ENCODE measurements at regions of chr2 and their contacts with region 1.

Region 1: DNA sequence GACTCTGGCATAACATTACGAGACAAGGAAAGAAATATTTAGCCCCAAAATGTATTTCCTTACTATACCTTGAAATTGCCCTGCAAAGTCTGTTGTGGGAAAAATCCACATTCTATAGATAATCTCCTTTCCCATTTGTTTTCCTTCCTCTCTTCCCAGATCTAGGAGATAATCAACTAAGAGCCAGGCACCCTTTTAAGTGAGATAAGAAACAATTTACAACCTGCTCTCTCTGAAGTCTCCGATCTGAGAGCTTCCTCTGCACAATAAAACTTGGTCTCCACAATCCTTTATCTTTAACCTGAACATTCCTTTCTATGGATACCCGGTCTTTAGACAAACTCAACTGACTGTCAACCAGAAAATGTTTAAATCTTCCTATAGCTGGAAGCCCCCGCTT is 1160.7 kb upstream of the NRXN1 start:
- DNase-seq: no peak
- ATAC-seq: no peak
- H3K4me3 ChIP-seq: no peak overlapping the region
- H3K4me3 Mint-ChIP-seq: no peak overlapping the region
- H3K27ac ChIP-seq: no peak overlapping the region
- H3K27ac Mint-ChIP-seq: no peak overlapping the region
- H3K4me1 ChIP-seq: no peaks in the 10 kb centered on the region
- H3K4me1 Mint-ChIP-seq: no peaks in the 10 kb centered on the region
- H3K27me3 ChIP-seq: no peaks in the 10 kb centered on the region
- H3K27me3 Mint-ChIP-seq: no peaks in the 10 kb centered on the region
- CTCF ChIP-seq: no peak

Region 2: DNA sequence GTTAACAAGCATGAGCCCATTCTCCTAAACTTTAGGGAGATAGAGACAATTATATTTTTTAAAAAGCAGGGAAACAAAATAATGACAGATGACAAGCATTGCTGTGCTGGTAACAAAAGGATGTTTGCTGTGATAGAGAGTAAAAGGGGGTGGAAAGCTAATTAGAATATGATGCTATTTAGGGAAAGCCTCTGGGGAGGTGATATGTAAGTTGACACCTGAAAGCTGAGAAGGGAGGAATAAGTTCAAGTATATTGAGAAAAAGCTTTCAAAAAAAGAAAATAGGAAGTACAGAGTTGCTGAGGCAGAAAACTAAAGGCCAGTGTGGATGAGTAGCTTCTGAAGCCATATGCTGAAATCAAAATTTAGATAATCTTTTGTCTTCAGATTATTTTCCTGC is 595.6 kb before region 1 on chr2:
- CTCF ChIA-PET with region 1: no interaction called
- POLR2A ChIA-PET with region 1: no interaction called
- intact Hi-C with region 1: no loop called
- DNase-seq: no peak
- ATAC-seq: no peak
- H3K4me3 ChIP-seq: no peak overlapping the region
- H3K4me3 Mint-ChIP-seq: no peak overlapping the region
- H3K27ac ChIP-seq: no peak overlapping the region
- H3K27ac Mint-ChIP-seq: no peak overlapping the region
- H3K4me1 ChIP-seq: no peaks in the 10 kb centered on the region
- H3K4me1 Mint-ChIP-seq: no peaks in the 10 kb centered on the region
- H3K27me3 ChIP-seq: no peaks in the 10 kb centered on the region
- H3K27me3 Mint-ChIP-seq: no peaks in the 10 kb centered on the region
- CTCF ChIP-seq: no peak

Region 3: DNA sequence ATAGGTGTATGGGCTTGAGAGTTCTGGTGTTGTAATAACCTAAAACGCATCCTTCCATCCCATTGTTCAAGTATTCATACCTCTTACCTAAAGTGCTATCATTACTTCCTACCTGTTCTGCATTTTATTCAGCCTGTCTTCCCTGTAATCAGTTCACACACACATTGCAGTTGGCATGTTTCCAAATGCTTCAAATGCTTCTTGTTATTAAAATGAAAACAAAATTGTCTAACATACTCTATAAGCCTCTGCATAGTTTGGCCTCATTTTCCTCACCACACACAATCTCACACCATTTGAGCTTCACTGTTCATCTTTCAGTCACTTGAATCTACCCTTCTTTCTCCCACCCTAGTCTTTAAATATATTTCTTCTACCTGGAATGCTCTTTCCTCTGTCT is 17.5 kb after region 1 on chr2:
- CTCF ChIA-PET with region 1: no interaction called
- POLR2A ChIA-PET with region 1: no interaction called
- intact Hi-C with region 1: no loop called
- DNase-seq: no peak
- ATAC-seq: no peak
- H3K4me3 ChIP-seq: no peak overlapping the region
- H3K4me3 Mint-ChIP-seq: no peak overlapping the region
- H3K27ac ChIP-seq: no peak overlapping the region
- H3K27ac Mint-ChIP-seq: no peak overlapping the region
- H3K4me1 ChIP-seq: no peaks in the 10 kb centered on the region
- H3K4me1 Mint-ChIP-seq: no peaks in the 10 kb centered on the region
- H3K27me3 ChIP-seq: no peaks in the 10 kb centered on the region
- H3K27me3 Mint-ChIP-seq: no peaks in the 10 kb centered on the region
- CTCF ChIP-seq: no peak

Region 4: DNA sequence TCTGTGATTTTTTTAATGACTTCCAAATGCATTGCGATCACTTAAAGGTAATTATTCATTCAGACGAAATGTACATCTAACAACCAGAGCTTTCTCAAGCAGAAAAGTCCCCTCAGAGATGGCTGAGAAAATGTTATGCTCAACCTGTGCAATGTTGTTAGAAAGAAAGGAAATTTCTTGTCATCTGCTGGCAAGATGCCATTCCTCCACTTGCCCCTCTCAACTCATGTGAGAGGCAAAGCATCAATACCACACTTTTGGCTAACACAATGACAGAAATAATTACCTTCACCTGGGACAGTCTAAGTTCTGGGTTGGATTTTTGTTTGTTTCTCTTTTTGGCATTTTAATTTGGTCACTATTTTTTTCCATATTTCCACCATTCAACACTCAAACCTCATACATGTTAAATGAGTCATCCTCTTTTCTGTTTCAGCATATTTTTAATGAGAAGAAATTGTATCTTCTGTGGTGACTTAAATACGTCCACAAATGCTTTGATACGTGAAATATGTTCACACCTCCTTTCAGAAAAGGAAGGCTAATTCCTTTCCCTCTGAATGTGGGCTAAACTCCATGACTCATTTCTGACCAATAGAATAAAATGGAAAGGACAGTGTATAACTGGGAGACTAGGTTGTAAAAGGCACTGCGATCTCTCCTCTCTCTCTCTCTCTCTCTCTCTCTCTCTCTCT is 1401.4 kb after region 1 on chr2:
- CTCF ChIA-PET with region 1: no interaction called
- POLR2A ChIA-PET with region 1: no interaction called
- intact Hi-C with region 1: loop called in 1 of 2 experiments (anchors 5 kb)
- DNase-seq: no peak
- ATAC-seq: no peak
- H3K4me3 ChIP-seq: no peak overlapping the region
- H3K4me3 Mint-ChIP-seq: no peak overlapping the region
- H3K27ac ChIP-seq: no peak overlapping the region
- H3K27ac Mint-ChIP-seq: no peak overlapping the region
- H3K4me1 ChIP-seq: no peaks in the 10 kb centered on the region
- H3K4me1 Mint-ChIP-seq: no peaks in the 10 kb centered on the region
- H3K27me3 ChIP-seq: no peaks in the 10 kb centered on the region
- H3K27me3 Mint-ChIP-seq: no peaks in the 10 kb centered on the region
- CTCF ChIP-seq: no peak

Measured in CD4-positive, alpha-beta T cell (primary cell).